Heart right ventricle (tissue), 16 donors: ENCODE measurements at regions of chr20 and their contacts with region 1.

Region 1: DNA sequence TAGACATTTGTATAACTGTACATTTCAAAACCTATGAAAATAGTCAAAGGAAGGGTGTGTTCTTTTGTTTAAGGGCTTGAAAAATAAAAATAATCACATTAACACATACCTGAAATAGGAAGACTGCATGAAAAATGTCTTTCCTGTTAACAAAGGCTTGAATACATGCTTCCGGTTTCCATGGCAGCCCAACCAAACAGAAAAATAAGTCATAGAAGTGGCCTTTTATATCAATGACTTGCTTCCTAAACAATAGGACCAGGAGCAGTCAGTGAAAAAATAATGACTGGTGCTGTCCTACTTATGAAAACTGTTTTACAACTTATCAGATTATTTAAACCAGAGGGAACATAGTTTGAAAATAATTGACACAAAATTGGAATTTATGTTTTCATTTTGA is 412.6 kb upstream of the PLCB4 start:
- DNase-seq: peak in 1 of 2 donors; percentile 73
- ATAC-seq: peak in 7 of 8 donors; percentile 38 to 87 (median 54)
- H3K4me3 ChIP-seq: no peak overlapping the region
- H3K27ac ChIP-seq: peak overlapping the region in 7 of 10 donors; percentile 28 to 76 (median 54)
- H3K4me1 ChIP-seq: peaks cover 0 to 50% (median 13%) of the 10 kb centered on the region in 9 donors
- H3K27me3 ChIP-seq: no peaks in the 10 kb centered on the region
- CTCF ChIP-seq: no peak

Region 2: DNA sequence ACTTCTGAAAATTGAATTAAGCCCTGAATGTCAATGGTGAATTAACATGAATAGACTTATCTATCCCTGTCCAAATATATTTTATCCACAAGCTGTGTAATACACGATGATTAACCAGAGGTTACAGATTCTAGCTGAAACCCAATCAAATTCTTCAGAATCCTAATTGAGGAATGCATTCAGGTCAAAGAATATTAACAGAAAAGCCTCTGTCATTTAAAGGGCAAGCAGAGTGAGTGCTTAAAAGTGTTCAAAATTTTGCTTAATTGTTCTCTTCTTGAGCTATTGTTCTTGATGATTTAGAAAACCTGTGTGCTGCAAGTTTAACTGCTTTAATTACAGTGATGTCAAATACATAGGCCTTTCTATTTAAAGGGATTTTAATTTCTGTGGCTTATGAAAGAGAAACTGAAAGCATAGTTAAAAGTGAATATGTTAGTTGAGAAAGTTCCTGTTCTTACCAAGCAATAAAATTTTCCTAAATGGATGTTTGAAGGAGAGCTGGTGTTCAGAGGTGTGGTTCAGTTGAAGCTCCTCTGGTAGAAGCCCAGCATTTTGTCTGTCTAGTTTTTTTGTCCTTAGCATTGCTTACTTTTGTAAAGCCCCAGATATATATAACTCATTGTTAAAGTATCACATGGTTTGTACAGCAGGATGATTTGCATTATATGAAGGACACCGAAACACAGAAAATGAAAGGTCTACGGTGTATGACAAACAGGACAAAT is 53.8 kb before region 1 on chr20:
- intact Hi-C with region 1: loop called in 1 of 10 experiments (anchors 10 kb)
- DNase-seq: no peak
- ATAC-seq: peak in 5 of 8 donors; percentile 14 to 71 (median 34)
- H3K4me3 ChIP-seq: peak overlapping the region in 6 of 10 donors; percentile 6 to 40 (median 26)
- H3K27ac ChIP-seq: peak overlapping the region in 9 of 10 donors; percentile 20 to 80 (median 49)
- H3K4me1 ChIP-seq: peaks cover 0 to 21% (median 15%) of the 10 kb centered on the region in 9 donors
- H3K27me3 ChIP-seq: no peaks in the 10 kb centered on the region
- CTCF ChIP-seq: no peak